ENCODE measurements at regions of chr19 and their contacts with region 1.

Region 1: DNA sequence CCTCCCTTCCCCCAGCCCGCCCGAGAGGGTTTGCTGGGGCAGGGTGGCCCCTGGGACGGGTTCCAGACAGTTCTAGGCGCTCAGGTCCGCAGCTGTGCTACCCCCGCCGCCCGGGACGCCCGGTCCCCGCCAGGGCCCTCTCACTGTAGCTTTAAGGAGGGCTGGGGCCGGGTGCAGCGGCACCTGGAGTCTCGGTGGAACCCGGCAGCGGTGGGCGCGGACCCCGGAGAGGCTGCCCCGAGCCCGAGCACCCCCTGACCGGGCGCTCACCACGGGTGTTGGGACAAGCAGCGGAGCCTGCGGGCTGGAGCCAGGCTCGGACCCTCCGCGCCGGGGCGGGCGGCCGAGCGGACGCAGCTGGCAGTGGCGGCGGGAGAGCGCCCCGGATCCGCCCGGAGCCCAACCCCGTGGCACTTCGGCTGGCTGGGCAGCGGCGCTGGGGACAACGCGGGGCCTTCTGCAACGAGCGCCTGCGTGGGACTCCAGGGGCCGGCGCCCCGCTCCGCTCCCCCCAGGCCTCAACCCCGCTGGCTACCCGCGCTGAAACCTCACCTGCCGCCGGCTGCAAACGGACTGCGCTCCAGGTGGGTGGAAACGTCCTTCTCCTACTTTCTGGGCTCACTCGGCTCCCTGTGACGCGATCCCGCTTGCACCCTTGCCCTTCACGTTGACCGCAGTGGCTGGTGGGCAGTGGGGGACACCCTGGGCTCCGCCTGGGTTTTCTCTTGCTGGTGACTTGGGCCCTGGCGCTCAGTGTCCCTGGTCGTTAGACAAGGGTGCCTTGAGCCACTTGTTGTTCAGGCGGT is 81.1 kb downstream of the ZNF429 start:
- DNase-seq: peak in 5 of 14 experiments; percentile 5 to 58 (median 35)
- ATAC-seq: peak; percentile 65
- H3K4me3 ChIP-seq: peak overlapping the region; percentile 57
- H3K4me3 Mint-ChIP-seq: peak overlapping the region; percentile 87
- H3K27ac ChIP-seq: no peak overlapping the region
- H3K27ac Mint-ChIP-seq: peak overlapping the region; percentile 55
- H3K4me1 ChIP-seq: peaks cover 4% of the 10 kb centered on the region
- H3K4me1 Mint-ChIP-seq: peaks cover 49% of the 10 kb centered on the region
- H3K27me3 ChIP-seq: no peaks in the 10 kb centered on the region
- H3K27me3 Mint-ChIP-seq: no peaks in the 10 kb centered on the region
- CTCF ChIP-seq: no peak

Region 2: GRCh38 chr19:21604351-21604926 is 17.9 kb after region 1 on chr19:
- CTCF ChIA-PET with region 1: no interaction called
- POLR2A ChIA-PET with region 1: interaction called, 20 read pairs
- intact Hi-C with region 1: loop called in 1 of 2 experiments (anchors 1 kb)
- DNase-seq: peak in 3 of 14 experiments; percentile 34 to 59 (median 54)
- ATAC-seq: peak; percentile 84
- H3K4me3 ChIP-seq: peak overlapping the region; percentile 56
- H3K4me3 Mint-ChIP-seq: peak overlapping the region; percentile 94
- H3K27ac ChIP-seq: peak overlapping the region; percentile 12 to 54
- H3K27ac Mint-ChIP-seq: peak overlapping the region; percentile 91
- H3K4me1 ChIP-seq: peaks cover 8% of the 10 kb centered on the region
- H3K4me1 Mint-ChIP-seq: peaks cover 21% of the 10 kb centered on the region
- H3K27me3 ChIP-seq: no peaks in the 10 kb centered on the region
- H3K27me3 Mint-ChIP-seq: no peaks in the 10 kb centered on the region
- CTCF ChIP-seq: no peak

Region 3: GRCh38 chr19:21677696-21678418 is 91.3 kb after region 1 on chr19:
- CTCF ChIA-PET with region 1: no interaction called
- POLR2A ChIA-PET with region 1: no interaction called
- intact Hi-C with region 1: no loop called
- DNase-seq: peak in 6 of 14 experiments; percentile 5 to 34 (median 23)
- ATAC-seq: peak; percentile 51
- H3K4me3 ChIP-seq: peak overlapping the region; percentile 50
- H3K4me3 Mint-ChIP-seq: peak overlapping the region; percentile 84
- H3K27ac ChIP-seq: no peak overlapping the region
- H3K27ac Mint-ChIP-seq: peak overlapping the region; percentile 45
- H3K4me1 ChIP-seq: no peaks in the 10 kb centered on the region
- H3K4me1 Mint-ChIP-seq: peaks cover 13% of the 10 kb centered on the region
- H3K27me3 ChIP-seq: no peaks in the 10 kb centered on the region
- H3K27me3 Mint-ChIP-seq: peaks cover 12% of the 10 kb centered on the region
- CTCF ChIP-seq: no peak

Region 4: DNA sequence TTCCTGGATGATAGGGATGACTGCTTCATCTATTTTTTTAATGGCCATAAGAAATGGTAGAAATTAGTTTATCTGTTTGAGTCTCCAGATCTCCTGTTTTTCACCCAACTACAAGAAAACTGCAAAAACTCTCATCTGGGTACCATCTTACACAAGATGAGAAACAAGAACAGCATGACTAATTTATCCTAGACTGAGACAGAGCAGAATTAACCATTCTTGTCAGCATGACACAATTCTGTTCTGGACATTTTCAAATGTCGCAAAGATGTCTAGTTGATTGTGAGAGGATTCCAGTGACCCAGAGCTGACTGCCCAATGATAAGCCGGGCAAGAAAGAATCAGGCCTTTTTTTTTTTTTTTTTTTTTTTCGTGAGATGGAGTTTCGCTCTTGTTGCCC is 236.7 kb after region 1 on chr19:
- CTCF ChIA-PET with region 1: no interaction called
- POLR2A ChIA-PET with region 1: no interaction called
- intact Hi-C with region 1: no loop called
- DNase-seq: no peak
- ATAC-seq: no peak
- H3K4me3 ChIP-seq: no peak overlapping the region
- H3K4me3 Mint-ChIP-seq: no peak overlapping the region
- H3K27ac ChIP-seq: no peak overlapping the region
- H3K27ac Mint-ChIP-seq: no peak overlapping the region
- H3K4me1 ChIP-seq: no peaks in the 10 kb centered on the region
- H3K4me1 Mint-ChIP-seq: peaks cover 3% of the 10 kb centered on the region
- H3K27me3 ChIP-seq: no peaks in the 10 kb centered on the region
- H3K27me3 Mint-ChIP-seq: no peaks in the 10 kb centered on the region
- CTCF ChIP-seq: no peak

Region 5: DNA sequence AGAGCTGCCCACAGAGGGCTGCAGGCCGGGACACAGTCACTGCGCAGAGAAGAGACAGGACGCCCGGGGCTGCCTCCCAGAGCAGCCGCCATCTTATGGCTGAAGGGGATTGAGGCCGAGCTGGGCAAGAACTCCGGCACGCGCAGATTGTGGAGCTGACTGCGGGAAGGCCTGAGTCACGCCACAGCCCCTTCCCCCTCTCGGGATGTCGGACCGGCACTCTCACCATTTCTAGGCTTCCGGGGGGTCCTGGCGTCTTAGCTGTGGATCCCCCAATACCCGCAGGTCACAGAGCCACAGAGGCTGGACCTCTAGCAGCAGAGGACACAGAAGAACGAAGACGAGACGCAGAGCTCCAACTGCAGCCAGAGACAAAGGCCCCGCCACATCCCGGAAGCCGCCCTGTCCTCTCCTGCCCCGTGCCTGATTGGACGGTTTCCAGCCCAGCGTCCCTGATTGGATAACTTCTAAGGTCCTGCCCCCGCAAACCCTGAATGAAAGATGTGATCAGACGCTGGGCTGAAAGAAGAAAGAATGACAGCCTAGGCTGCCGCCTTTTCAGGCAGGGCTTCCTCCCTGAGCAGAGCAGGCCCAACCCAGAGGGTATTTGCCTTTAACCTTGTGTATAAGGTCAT is 249.4 kb after region 1 on chr19 and contains the start of gene ZNF43:
- CTCF ChIA-PET with region 1: no interaction called
- POLR2A ChIA-PET with region 1: no interaction called
- intact Hi-C with region 1: loop called in 1 of 2 experiments (anchors 10 kb)
- DNase-seq: peak; percentile 87 to 97 (median 91)
- ATAC-seq: peak; percentile 98
- H3K4me3 ChIP-seq: peak within 1 kb of the TSS; percentile 81
- H3K4me3 Mint-ChIP-seq: peak within 1 kb of the TSS; percentile 97
- H3K27ac ChIP-seq: peak within 1 kb of the TSS; percentile 82 to 83
- H3K27ac Mint-ChIP-seq: peak within 1 kb of the TSS; percentile 94
- H3K4me1 ChIP-seq: peaks cover 14% of the 10 kb centered on the region
- H3K4me1 Mint-ChIP-seq: peaks cover 33% of the 10 kb centered on the region
- H3K27me3 ChIP-seq: no peaks in the 10 kb centered on the region
- H3K27me3 Mint-ChIP-seq: no peaks in the 10 kb centered on the region
- CTCF ChIP-seq: no peak
- total RNA-seq, gene ZNF43: 26.1 to 30.2 TPM